ENCODE measurements at regions of chr19 and their contacts with region 1.

Region 1: GRCh38 chr19:35066691-35067563 is 25.4 kb downstream of the HPN start:
- H3K4me3 ChIP-seq: no peak overlapping the region
- H3K27ac ChIP-seq: no peak overlapping the region
- H3K4me1 ChIP-seq: peaks cover 10% of the 10 kb centered on the region
- CTCF ChIP-seq: peak; percentile 86

Region 2: GRCh38 chr19:34847393-34847792 is 219.5 kb before region 1 on chr19:
- CTCF ChIA-PET with region 1: no interaction called
- POLR2A ChIA-PET with region 1: no interaction called
- H3K4me3 ChIP-seq: no peak overlapping the region
- H3K27ac ChIP-seq: no peak overlapping the region
- H3K4me1 ChIP-seq: no peaks in the 10 kb centered on the region
- CTCF ChIP-seq: no peak

Region 3: GRCh38 chr19:34953092-34953491 is 113.8 kb before region 1 on chr19:
- CTCF ChIA-PET with region 1: no interaction called
- POLR2A ChIA-PET with region 1: no interaction called
- H3K4me3 ChIP-seq: no peak overlapping the region
- H3K27ac ChIP-seq: no peak overlapping the region
- H3K4me1 ChIP-seq: no peaks in the 10 kb centered on the region
- CTCF ChIP-seq: no peak

Region 4: DNA sequence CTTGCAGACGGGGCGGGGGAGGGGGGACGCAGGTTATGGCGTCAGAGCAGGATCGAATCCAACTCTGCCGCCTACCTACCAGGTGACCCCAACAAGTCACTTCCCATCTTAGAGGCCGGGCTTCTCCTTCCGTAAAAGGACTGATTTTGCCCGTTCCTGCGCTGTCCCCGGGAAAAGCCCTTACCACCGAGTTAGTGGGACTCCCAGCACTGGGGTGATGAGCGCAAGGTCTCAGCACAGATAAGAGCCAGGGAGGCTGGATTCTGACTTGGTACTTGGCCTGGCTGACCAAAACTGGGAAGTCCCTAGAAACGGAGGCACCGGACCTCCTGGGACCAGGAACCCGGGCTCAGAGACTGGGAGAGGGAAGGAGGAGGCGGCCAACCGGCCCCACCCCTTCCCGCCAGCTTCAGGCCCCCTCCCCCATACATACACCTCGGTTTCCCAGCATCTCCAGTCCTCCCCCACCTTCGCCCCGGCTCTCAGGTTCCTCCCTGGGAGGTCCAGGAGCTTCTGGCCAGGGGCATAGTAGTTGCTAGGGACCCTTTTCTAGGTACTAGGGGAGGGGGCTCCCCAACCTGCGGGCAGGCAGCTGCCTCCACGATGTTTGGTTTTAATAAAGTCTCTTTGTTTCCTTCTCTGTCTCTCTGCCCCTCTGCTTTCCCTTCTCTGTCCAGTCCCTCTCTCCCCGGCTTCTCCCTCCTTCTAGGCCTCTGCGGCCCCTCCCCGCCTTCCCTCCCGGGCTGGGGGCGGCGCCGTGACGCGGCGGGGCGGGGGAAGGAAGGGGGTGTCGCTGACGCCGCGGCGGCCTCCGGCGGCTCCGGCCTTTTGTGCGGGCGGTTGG is 67.2 kb before region 1 on chr19 and contains the start of gene GRAMD1A:
- CTCF ChIA-PET with region 1: interaction called, 10 read pairs
- POLR2A ChIA-PET with region 1: no interaction called
- H3K4me3 ChIP-seq: peak within 1 kb of the TSS; percentile 63
- H3K27ac ChIP-seq: peak within 1 kb of the TSS; percentile 98
- H3K4me1 ChIP-seq: peaks cover 35% of the 10 kb centered on the region
- CTCF ChIP-seq: no peak

Region 5: DNA sequence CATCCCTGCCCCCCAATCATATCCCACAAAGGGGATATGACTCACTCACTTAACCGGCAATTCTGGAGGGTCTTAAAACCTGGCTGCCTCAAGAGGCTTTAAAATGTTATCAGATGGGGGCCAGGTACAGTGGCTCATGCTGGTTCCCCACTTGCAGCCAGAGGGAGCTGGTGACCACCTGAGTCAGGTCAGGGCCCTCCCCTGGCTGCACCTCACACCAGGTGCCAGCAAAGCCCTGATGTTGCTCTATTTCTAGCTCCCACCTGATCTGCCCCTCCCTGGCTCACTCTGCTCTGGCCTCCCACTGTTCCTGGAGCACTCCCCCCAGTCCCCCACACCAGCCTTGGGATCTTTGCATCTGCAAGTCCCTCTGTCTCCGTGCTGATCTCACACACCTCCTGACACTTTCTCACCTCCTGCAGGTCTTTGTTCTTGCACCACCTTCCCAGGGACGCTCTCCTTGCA is 11.2 kb before region 1 on chr19:
- CTCF ChIA-PET with region 1: interaction called, 101 read pairs
- POLR2A ChIA-PET with region 1: interaction called, 4 read pairs
- H3K4me3 ChIP-seq: no peak overlapping the region
- H3K27ac ChIP-seq: no peak overlapping the region
- H3K4me1 ChIP-seq: peaks cover 7% of the 10 kb centered on the region; the same call in 1 of the 2 replicates
- CTCF ChIP-seq: peak; percentile 89

Region 6: DNA sequence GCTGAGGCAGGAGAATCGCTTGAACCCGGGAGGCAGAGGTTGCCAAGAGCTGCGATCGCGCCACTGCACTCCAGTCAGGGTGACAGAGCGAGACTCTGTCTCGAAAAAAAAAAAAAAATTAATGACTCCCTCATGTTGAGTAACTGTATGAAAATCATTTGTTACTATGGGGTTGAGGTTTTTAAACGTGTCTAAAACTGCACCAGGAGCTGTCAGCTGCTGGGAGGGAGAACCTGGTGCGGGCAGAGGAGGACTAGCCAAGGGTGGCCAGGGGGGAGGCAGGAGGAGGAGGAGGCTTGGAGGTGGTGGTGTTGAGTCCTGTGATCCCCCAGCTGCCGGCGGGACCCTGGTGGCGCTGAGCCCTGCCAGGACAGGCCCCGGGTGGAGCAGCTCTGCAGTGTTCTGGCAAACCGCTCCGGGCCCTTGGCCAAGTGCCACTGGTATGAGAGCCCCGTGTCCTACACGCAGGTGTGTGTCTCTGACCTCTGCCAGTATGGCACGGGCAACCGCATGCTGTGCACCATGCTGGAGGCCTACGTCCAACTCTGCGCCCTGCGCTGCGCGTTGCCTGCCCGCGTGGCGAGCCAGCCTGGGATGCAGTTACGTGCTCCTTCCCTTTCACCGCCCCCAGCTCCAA is 31.6 kb after region 1 on chr19:
- CTCF ChIA-PET with region 1: interaction called, 87 read pairs
- POLR2A ChIA-PET with region 1: no interaction called
- H3K4me3 ChIP-seq: no peak overlapping the region
- H3K27ac ChIP-seq: no peak overlapping the region
- H3K4me1 ChIP-seq: no peaks in the 10 kb centered on the region
- CTCF ChIP-seq: no peak

Region 7: GRCh38 chr19:35135389-35135909 is 68.5 kb after region 1 on chr19:
- CTCF ChIA-PET with region 1: interaction called, 108 read pairs
- POLR2A ChIA-PET with region 1: no interaction called
- H3K4me3 ChIP-seq: no peak overlapping the region
- H3K27ac ChIP-seq: no peak overlapping the region; the same call in 1 of the 2 replicates
- H3K4me1 ChIP-seq: peaks cover 3% of the 10 kb centered on the region
- CTCF ChIP-seq: peak; percentile 98

Region 8: DNA sequence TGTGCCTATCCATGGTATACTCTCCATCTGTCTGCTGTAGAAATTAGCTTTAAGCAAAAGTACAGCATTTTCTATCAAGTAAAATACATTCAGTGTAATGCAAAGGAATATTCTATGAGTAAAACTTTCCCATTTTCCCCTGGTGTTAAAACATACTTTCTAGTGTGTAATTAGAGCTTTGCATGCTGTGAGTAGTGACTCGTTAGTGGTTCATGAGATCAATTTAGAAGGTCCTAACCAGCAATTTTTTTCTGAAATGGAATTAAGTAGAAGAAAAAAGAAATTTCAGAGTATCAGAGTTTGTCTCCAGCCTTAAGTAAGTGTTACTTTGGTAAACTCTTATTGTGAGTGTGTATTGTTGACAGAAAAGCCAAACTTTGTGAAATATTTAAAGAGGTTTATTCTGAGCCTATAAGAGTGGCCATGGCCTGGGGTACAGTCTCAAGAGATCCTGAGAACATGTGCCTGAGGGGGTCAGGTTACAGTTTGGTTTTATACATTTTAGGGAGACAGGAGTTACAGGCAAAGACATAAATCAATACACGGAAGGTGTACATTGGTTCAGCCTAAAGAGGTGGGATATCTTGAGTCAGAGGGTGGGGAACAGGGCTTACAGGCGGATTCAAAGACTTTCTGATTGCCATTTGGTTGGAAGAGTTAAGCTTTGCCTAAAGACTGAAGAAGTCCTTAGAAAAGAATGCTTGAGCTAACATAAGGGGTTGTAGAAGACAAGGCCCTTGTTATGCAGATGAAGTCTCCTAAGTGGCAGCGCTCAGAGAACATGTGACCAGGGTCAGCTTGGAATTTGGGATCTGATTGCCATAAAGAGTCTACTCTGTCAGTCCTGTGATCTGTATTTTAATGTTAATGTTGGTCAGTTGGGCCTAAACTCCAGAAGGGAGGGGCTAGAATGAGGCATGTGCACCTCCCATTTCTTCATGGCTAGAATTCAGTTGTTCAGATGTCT is 136.1 kb after region 1 on chr19:
- CTCF ChIA-PET with region 1: interaction called, 12 read pairs
- POLR2A ChIA-PET with region 1: no interaction called
- H3K4me3 ChIP-seq: no peak overlapping the region
- H3K27ac ChIP-seq: no peak overlapping the region
- H3K4me1 ChIP-seq: no peaks in the 10 kb centered on the region
- CTCF ChIP-seq: no peak

Region 9: DNA sequence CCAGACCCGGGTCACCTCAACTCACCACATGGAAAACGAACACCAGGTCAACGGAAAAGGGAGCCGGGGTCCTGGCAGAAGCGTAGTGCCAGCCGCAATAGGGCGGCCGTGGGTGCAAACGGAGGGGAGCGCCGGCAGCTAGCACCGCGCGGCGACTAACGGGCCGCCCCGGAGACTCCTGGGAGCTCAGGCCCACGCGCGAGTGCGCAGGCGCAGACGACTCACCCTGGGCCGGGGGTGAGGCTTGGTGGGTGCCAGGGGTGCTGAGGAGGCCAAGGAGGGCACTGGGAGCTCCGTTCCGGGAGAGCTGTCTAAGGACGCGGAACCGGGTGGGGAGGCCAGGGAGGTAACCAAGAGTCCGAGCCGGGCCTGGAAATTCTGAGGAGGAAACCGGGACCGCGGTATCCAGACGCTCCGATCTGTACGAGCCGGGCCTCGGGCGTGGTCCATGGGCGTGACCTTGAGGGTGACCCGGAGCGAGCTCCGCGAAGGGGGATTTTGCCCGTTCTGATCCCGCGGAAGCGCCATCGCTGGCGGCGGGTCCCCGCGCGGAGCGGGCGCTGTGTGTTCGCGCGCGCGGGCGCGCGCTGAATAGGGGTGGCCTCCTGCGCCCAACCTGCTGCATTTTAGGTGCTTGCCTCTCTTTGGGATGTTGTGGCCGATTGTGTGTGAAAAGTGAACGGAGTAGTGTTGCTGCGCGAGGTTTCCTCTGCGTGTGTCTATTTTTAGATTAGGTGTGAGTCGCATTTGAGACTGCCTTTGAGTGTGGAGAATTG is 1538.4 kb after region 1 on chr19 and contains the start of gene ZNF382:
- CTCF ChIA-PET with region 1: no interaction called
- POLR2A ChIA-PET with region 1: no interaction called
- H3K4me3 ChIP-seq: peak within 1 kb of the TSS; percentile 57
- H3K27ac ChIP-seq: peak within 1 kb of the TSS; percentile 98
- H3K4me1 ChIP-seq: peaks cover 6% of the 10 kb centered on the region
- CTCF ChIP-seq: no peak; the same call in none of the 2 replicates